Caco-2 (cell line): ENCODE measurements at regions of chr2 and their contacts with region 1.

Region 1: DNA sequence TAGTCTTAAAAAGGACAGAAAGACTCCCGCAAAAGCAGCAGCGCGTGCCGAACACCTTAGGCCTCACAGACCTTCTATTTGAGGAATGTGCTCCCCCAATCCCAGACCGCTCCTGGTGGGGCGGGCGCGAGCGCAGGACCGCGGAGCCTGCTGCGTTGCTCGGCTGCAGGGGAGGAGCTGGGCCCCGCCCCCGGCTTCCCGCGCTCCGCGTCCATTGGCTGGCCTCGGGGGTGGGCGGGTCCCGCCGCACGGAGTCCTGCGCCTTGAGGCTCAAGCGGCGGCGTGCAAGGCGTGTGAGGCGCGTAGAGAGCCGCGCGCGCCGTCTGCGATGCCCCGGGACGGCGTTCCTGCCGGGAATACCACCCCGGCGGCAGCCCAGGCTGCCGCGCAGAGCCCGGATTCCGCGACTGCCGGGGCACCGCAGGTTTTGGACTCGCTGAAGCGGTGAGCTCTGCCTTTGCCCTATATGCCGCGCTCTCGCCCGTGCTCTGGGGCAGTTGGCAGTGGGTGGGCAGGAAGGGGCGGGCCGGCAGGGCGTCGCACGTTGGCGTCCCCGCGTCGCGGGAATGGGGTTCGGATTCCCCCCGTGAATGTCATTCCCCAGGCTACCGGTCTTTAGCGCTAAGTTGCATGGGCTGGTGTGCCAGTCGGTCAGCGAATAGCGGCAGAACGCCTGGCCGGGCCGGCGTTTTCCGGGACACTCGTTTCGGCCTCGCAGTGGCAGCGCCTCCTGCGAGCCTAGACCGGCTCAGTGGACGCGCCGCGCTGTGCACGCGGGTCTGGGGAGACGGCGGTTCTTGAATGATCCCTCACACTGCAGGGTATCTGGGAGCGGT is 49.6 kb upstream of the PAIP2B start:
- DNase-seq: peak; percentile 93 to 99
- H3K4me3 ChIP-seq: peak overlapping the region; percentile 62
- H3K4me3 Mint-ChIP-seq: peak overlapping the region; percentile 74
- H3K27ac Mint-ChIP-seq: peak overlapping the region; percentile 71
- H3K4me1 ChIP-seq: peaks cover 7% of the 10 kb centered on the region; the same call in 1 of the 2 replicates
- H3K4me1 Mint-ChIP-seq: peaks cover 6% of the 10 kb centered on the region
- H3K27me3 ChIP-seq: no peaks in the 10 kb centered on the region
- H3K27me3 Mint-ChIP-seq: peaks cover 13% of the 10 kb centered on the region
- CTCF ChIP-seq: no peak

Region 2: DNA sequence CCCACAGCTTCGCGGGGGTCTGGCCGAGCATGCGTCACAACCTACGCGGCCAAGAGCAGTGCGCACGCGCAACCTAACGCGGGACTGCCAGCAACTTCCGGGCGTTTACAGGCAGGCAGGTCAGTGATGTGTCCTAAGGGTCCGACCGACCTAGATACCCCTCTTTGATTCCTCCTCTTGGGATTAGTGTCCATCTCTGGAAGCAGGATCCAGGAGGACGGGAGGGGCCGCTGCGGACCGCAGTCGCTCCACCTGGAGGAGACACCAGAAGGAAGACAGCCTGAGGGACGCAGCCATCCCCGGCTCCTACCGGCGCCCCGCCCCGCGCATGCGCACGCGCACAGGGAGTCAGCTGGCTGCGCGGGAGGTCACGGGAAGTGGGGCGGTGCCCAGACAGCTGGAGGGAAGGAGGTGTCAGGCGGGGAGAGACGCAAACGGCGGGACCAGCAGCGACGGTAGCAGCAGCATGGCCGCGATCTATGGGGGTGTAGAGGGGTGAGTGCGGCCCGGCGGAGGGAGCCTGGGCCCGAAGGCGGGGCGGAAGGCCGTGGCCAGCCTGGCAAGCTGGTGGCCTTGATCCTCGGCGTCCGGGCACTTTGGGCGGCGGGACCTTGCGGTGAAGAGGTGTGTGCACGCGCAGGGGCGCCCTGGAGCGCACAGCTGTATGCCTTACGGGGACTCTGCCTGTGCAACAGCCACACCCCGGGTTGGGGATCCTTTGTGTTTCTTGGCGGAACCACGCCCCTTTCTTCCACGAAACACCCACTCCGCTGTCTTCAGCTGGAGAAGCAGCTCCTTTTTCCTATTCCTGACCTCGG is 208.1 kb before region 1 on chr2 and contains the start of gene NAGK:
- CTCF ChIA-PET with region 1: no interaction called
- POLR2A ChIA-PET with region 1: no interaction called
- intact Hi-C with region 1: no loop called
- DNase-seq: peak; percentile 96 to 98
- H3K4me3 ChIP-seq: peak within 1 kb of the TSS; percentile 71
- H3K4me3 Mint-ChIP-seq: peak within 1 kb of the TSS; percentile 76
- H3K27ac Mint-ChIP-seq: peak within 1 kb of the TSS; percentile 51
- H3K4me1 ChIP-seq: 0 out of 2 replicates have a peak, but pooled peaks cover 4% of the 10 kb centered on the region
- H3K4me1 Mint-ChIP-seq: peaks cover 10% of the 10 kb centered on the region
- H3K27me3 ChIP-seq: no peaks in the 10 kb centered on the region
- H3K27me3 Mint-ChIP-seq: no peaks in the 10 kb centered on the region
- CTCF ChIP-seq: no peak
- total RNA-seq, gene NAGK: 87.6 and 101 TPM in 2 replicates

Region 3: DNA sequence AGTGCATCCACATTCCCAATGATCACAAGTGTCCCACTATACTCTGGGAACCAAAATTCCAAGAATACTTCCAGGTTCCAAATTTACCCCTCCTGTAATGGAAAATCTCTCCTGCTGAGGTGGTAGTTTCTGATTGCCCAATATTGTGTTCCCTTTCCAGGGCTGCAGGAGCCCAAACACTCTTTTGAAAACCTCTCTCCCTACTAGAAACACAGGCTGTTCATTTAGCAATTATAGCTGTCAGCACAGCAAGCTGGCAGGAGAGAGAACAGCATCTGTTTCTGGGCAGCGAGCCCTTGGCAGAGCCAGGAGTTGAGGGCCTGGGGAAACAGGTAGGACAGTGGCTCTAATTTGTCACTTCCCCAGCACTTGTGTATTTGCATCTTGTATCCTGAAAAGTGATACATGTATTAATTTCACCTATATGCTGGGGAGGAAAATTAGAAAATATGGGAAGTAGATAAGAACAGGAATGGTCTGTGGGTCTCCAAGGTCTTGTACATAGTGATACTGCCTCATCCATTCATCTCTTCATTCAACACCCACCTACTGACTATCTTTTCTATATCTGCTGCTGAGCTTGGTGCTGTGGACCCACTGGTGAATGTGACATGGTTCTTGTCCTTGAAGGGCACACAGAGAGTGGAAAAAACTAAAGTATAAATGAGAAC is 32.8 kb before region 1 on chr2:
- CTCF ChIA-PET with region 1: interaction called, 4 read pairs
- POLR2A ChIA-PET with region 1: interaction called, 7 read pairs
- intact Hi-C with region 1: loop called (anchors 1 kb)
- DNase-seq: no peak
- H3K4me3 ChIP-seq: no peak overlapping the region
- H3K4me3 Mint-ChIP-seq: peak overlapping the region; percentile 25
- H3K27ac Mint-ChIP-seq: peak overlapping the region; percentile 73
- H3K4me1 ChIP-seq: peaks cover 20% of the 10 kb centered on the region
- H3K4me1 Mint-ChIP-seq: peaks cover 22% of the 10 kb centered on the region
- H3K27me3 ChIP-seq: no peaks in the 10 kb centered on the region
- H3K27me3 Mint-ChIP-seq: no peaks in the 10 kb centered on the region
- CTCF ChIP-seq: no peak